Pancreas (tissue), 10 donors: ENCODE measurements at regions of chr5 and their contacts with region 1.

Region 1: GRCh38 chr5:57298295-57298984 is 124.6 kb downstream of the GPBP1 start:
- DNase-seq: peak; percentile 54 to 88 (median 81)
- ATAC-seq: peak; percentile 94 to 98 (median 97)
- H3K4me3 ChIP-seq: no peak overlapping the region
- H3K27ac ChIP-seq: peak overlapping the region in 2 of 4 donors; percentile 1 to 8
- H3K4me1 ChIP-seq: peaks cover 0 to 6% (median 5%) of the 10 kb centered on the region in 3 donors
- H3K27me3 ChIP-seq: no peaks in the 10 kb centered on the region
- CTCF ChIP-seq: peak; percentile 56 to 74 (median 58)

Region 2: DNA sequence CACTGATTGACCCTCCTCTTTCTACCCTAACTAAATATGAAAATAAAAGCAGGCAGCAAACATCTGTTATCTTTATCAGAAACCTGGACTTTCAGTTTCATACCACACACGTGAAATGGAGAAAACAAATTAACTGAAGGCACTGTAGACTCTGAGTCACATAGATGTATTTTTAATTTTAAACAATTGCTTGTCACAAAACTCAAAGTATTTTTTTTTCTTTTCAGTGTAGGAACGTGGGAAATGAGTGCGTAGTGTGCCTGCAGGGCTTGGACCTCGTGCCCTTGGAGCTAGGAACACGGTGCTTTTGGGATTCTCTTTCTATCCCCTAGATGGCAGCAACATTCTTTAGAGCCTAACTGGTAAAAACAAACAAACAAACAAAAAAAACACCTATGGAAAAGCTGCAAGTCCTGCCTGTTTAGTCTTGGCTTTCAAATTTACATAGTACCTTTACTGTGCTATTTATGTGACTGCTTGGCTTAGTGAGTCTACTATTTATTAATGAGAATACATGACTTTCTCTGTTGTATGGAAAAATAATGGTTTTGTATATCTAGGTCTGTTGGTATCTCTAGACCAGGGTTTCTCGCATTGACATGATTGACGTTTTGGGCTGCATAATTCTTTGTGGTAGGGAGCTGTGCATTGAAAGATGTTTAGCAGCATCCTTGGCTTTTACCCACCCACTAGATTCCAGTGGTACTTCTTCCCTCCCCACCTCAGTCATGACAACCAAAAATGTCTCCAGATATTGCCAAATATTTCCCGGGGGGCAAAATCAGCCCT is 201.0 kb after region 1 on chr5:
- intact Hi-C with region 1: loop called in 1 of 3 experiments (anchors 10 kb)
- DNase-seq: peak in 1 of 6 donors; percentile 15
- ATAC-seq: peak; percentile 47 to 84 (median 69)
- H3K4me3 ChIP-seq: peak overlapping the region in 2 of 4 donors; percentile 18 to 22
- H3K27ac ChIP-seq: no peak overlapping the region
- H3K4me1 ChIP-seq: peaks cover 0 to 13% (median 13%) of the 10 kb centered on the region in 3 donors
- H3K27me3 ChIP-seq: no peaks in the 10 kb centered on the region
- CTCF ChIP-seq: peak; percentile 6 to 49 (median 42)